Naive thymus-derived CD8-positive, alpha-beta T cell (primary cell): ENCODE measurements at regions of chr6 and their contacts with region 1.

Region 1: GRCh38 chr6:30828027-30828960 is 56.0 kb upstream of the DDR1 start:
- DNase-seq: peak; percentile 59 to 89 (median 78)
- ATAC-seq: peak; percentile 83 to 84
- H3K4me3 Mint-ChIP-seq: peak overlapping the region; percentile 89 to 98 (median 96)
- H3K27ac Mint-ChIP-seq: peak overlapping the region; percentile 88 to 100 (median 95)
- H3K4me1 Mint-ChIP-seq: peaks cover 35 to 87% (median 76%) of the 10 kb centered on the region in 4 donors
- H3K27me3 Mint-ChIP-seq: no peaks in the 10 kb centered on the region

Region 2: DNA sequence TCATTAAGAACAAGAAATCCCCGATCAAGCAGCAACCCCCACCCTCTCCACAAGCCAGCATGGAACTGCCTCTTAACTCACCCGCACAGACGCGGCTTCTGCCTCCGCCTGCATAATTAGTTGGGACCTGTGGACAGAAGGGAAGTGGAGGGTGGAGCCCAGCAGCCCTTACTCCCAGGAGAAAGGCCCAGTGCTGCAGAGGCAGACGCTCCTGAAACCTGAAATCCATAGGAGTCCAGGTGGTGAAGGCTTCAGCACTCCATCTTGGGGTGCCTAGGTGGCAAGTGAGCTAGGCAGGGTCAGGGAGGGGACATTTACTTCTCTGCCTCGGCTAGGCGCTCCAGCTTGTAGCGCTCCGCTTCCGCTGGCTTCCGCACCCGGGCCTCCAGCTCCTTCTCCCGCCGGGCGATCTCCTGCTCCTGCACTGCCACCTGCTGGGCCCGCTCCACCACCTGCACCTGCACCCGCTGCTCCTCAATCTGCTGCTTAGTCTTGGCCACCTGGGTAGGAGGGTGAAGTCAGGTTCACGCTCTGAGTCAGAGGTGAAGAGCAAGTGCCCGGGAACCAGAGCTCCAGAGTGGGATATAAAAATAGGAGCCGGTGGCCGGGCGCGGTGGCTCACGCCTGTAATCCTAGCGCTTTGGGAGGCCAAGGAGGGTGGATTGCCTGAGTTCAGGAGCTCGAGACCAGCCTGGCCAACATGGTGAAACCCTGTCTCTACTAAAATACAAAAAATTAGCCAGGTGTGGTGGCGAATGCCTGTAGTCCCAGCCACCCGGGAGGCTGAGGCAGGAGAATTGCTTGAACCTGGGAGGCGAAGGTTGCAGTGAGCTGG is 97.5 kb before region 1 on chr6:
- POLR2A ChIA-PET with region 1: interaction called, 17 read pairs
- DNase-seq: peak; percentile 66 to 90 (median 80)
- ATAC-seq: peak; percentile 98 to 99
- H3K4me3 Mint-ChIP-seq: peak overlapping the region; percentile 14 to 77 (median 51)
- H3K27ac Mint-ChIP-seq: peak overlapping the region; percentile 47 to 81 (median 70)
- H3K4me1 Mint-ChIP-seq: peaks cover 21 to 47% (median 31%) of the 10 kb centered on the region in 4 donors
- H3K27me3 Mint-ChIP-seq: no peaks in the 10 kb centered on the region

Region 3: GRCh38 chr6:30787954-30788353 is 40.3 kb before region 1 on chr6:
- POLR2A ChIA-PET with region 1: no interaction called
- DNase-seq: no peak
- ATAC-seq: peak in 1 of 2 donors; percentile 65
- H3K4me3 Mint-ChIP-seq: peak overlapping the region in 3 of 10 donors; percentile 17 to 73 (median 45)
- H3K27ac Mint-ChIP-seq: peak overlapping the region in 4 of 10 donors; percentile 4 to 49 (median 42)
- H3K4me1 Mint-ChIP-seq: peaks cover 17 to 48% (median 42%) of the 10 kb centered on the region in 4 donors
- H3K27me3 Mint-ChIP-seq: no peaks in the 10 kb centered on the region

Region 4: DNA sequence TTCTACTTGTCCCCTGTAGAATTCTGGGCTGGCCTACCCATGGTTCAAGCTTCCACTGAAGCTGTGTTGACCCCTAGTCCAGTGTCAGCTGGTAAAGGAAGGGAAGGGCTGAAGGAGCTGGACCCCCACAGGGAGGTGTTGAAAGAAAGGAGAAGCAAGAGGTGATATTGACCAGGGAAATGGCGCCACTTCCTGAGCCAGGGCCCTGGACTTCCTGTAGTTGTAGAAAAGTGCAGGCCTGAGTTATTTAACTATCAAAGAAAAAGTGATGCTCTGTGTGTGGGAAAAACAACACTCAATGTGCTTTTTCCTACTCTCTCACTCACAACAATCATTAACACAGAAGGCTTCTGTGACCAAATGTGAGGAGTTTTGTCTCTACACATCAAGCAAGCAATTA is 24.0 kb before region 1 on chr6:
- POLR2A ChIA-PET with region 1: no interaction called
- DNase-seq: no peak
- ATAC-seq: no peak
- H3K4me3 Mint-ChIP-seq: no peak overlapping the region
- H3K27ac Mint-ChIP-seq: peak overlapping the region in 5 of 10 donors; percentile 4 to 67 (median 35)
- H3K4me1 Mint-ChIP-seq: peaks cover 10 to 43% (median 26%) of the 10 kb centered on the region in 4 donors
- H3K27me3 Mint-ChIP-seq: no peaks in the 10 kb centered on the region

Region 5: GRCh38 chr6:30844091-30844535 is 15.8 kb after region 1 on chr6:
- POLR2A ChIA-PET with region 1: interaction called, 13 read pairs
- DNase-seq: no peak
- ATAC-seq: no peak
- H3K4me3 Mint-ChIP-seq: peak overlapping the region in 2 of 10 donors; percentile 41 to 55
- H3K27ac Mint-ChIP-seq: peak overlapping the region in 2 of 10 donors; percentile 5 to 6
- H3K4me1 Mint-ChIP-seq: peaks cover 11 to 32% (median 26%) of the 10 kb centered on the region in 4 donors
- H3K27me3 Mint-ChIP-seq: peaks cover 0 to 3% (median 0%) of the 10 kb centered on the region in 5 donors

Region 6: DNA sequence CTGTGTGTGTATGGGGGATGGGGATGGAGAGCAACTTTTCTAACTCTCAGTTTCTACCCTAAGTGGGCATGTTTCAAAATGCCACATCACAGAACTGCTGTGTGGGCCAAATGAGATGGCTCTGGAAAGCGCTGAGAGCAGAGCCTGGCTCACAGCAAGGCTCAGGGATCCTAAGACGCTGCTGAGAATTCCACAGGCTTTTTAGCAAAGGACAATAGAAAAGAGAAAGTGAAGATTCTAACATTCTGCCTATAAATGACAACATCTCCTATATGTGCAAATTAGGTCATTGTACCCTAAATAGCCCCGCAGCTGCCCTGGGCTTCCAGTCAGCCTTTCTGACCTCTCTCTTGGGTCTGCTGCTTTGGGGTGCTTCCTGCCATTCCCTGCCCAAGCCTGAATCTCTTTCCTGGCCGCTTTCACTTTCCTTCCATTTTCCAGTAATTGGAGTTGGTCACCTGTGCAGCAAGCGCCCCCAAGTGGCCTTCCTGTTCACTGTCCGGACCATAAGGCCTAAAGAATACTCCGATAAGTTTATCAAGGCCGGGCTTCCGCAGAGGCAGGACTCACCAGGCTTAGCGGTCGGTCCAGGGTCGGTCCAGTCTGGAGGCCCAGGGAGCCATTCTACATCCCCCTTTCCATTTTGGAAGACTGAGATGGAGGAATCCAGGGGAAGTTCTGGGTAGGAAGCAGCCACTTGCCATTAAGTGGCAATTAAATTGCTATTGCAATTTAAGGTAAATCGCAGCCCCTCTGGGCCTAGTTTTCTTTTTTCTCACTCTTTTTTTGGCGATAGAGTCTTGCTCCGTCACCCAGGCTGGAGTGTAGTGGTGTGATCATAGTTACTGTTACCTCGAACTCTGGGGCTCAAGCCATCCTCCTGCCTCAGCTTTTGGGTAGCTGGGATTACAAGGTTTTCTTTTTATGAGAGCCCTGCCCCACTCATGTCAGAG is 49.4 kb after region 1 on chr6:
- POLR2A ChIA-PET with region 1: interaction called, 34 read pairs
- DNase-seq: peak; percentile 49 to 86 (median 68)
- ATAC-seq: peak; percentile 78 to 92
- H3K4me3 Mint-ChIP-seq: peak overlapping the region; percentile 67 to 92 (median 81)
- H3K27ac Mint-ChIP-seq: peak overlapping the region; percentile 57 to 95 (median 88)
- H3K4me1 Mint-ChIP-seq: peaks cover 9 to 27% (median 14%) of the 10 kb centered on the region in 4 donors
- H3K27me3 Mint-ChIP-seq: no peaks in the 10 kb centered on the region

Region 7: GRCh38 chr6:30883685-30884520 is 55.6 kb after region 1 on chr6 and contains the start of gene DDR1:
- POLR2A ChIA-PET with region 1: interaction called, 34 read pairs
- DNase-seq: peak in 8 of 10 donors; percentile 23 to 71 (median 36)
- ATAC-seq: peak; percentile 62 to 65
- H3K4me3 Mint-ChIP-seq: peak within 1 kb of the TSS; percentile 70 to 94 (median 86)
- H3K27ac Mint-ChIP-seq: peak within 1 kb of the TSS; percentile 58 to 93 (median 88)
- H3K4me1 Mint-ChIP-seq: peaks cover 26 to 44% (median 34%) of the 10 kb centered on the region in 4 donors
- H3K27me3 Mint-ChIP-seq: no peaks in the 10 kb centered on the region
- polyA plus RNA-seq, gene DDR1: 0.57 to 5.4 (median 1.5) TPM